PC-9 (cell line): ENCODE measurements at regions of chr3 and their contacts with region 1.

Region 1: DNA sequence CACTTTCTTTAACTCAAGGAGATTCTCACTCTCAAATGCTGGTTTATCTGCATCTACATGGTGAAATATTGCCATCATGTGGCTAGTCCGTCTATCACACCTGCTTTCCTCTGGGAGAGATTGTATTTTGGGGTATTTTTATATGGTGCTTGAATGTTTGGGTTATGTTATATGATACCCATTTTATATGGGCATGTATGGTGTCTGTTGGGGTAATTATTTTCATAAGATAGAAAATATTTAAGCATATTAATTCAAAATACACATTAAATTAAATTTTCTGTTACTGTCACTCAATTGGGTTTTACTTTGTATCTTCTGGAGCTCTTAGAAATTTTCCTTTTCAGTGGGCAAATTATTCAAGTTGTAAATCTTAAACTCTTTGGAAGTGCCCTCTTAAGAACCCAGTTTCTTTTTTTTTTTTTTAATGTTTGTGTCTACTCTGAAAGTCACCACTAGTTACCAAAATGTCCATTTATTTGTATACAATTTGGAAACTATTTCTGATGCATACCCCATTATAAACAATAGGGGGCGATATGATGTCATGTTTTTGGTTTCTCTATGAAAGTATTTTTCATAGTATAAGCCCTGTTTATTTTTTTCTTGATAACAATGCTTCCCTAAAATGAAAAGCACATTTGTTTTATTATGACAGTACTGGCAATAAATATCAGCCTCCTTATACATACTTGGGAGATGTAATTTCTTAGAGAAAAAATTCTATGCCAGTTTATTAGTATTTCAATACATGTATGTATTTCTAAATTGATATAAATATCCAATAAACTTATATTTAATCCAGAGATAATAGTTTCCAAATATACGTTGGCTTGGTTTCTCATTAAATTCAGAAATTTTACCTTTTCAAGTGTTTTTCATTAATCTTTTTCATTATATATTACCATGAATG is 36.1 kb upstream of the PLSCR5 start:
- DNase-seq: peak in 1 of 2 experiments; percentile 32
- H3K4me3 ChIP-seq: no peak overlapping the region
- H3K27ac ChIP-seq: no peak overlapping the region
- H3K4me1 ChIP-seq: no peaks in the 10 kb centered on the region
- H3K27me3 ChIP-seq: no peaks in the 10 kb centered on the region
- CTCF ChIP-seq: peak; percentile 65

Region 2: GRCh38 chr3:145776782-145777408 is 864.3 kb before region 1 on chr3:
- CTCF ChIA-PET with region 1: no interaction called
- POLR2A ChIA-PET with region 1: no interaction called
- intact Hi-C with region 1: loop called (anchors 10 kb)
- DNase-seq: peak in 1 of 2 experiments; percentile 25
- H3K4me3 ChIP-seq: no peak overlapping the region
- H3K27ac ChIP-seq: no peak overlapping the region
- H3K4me1 ChIP-seq: no peaks in the 10 kb centered on the region
- H3K27me3 ChIP-seq: no peaks in the 10 kb centered on the region
- CTCF ChIP-seq: peak; percentile 71

Region 3: GRCh38 chr3:146065573-146066006 is 575.6 kb before region 1 on chr3:
- CTCF ChIA-PET with region 1: interaction called, 4 read pairs
- POLR2A ChIA-PET with region 1: no interaction called
- intact Hi-C with region 1: loop called (anchors 5 kb)
- DNase-seq: peak; percentile 15 to 37
- H3K4me3 ChIP-seq: no peak overlapping the region
- H3K27ac ChIP-seq: no peak overlapping the region
- H3K4me1 ChIP-seq: 0 out of 2 replicates have a peak, but pooled peaks cover 9% of the 10 kb centered on the region
- H3K27me3 ChIP-seq: no peaks in the 10 kb centered on the region
- CTCF ChIP-seq: peak; percentile 91

Region 4: GRCh38 chr3:146189519-146190173 is 451.6 kb before region 1 on chr3:
- CTCF ChIA-PET with region 1: interaction called, 3 read pairs
- POLR2A ChIA-PET with region 1: no interaction called
- intact Hi-C with region 1: loop called (anchors 2 kb)
- DNase-seq: peak; percentile 16 to 45
- H3K4me3 ChIP-seq: no peak overlapping the region
- H3K27ac ChIP-seq: no peak overlapping the region
- H3K4me1 ChIP-seq: no peaks in the 10 kb centered on the region
- H3K27me3 ChIP-seq: no peaks in the 10 kb centered on the region
- CTCF ChIP-seq: peak; percentile 82

Region 5: GRCh38 chr3:146589899-146590508 is 51.2 kb before region 1 on chr3:
- CTCF ChIA-PET with region 1: interaction called, 7 read pairs
- POLR2A ChIA-PET with region 1: no interaction called
- intact Hi-C with region 1: loop called (anchors 1 kb)
- DNase-seq: peak in 1 of 2 experiments; percentile 19
- H3K4me3 ChIP-seq: no peak overlapping the region
- H3K27ac ChIP-seq: no peak overlapping the region
- H3K4me1 ChIP-seq: no peaks in the 10 kb centered on the region
- H3K27me3 ChIP-seq: no peaks in the 10 kb centered on the region
- CTCF ChIP-seq: peak; percentile 64

Region 6: DNA sequence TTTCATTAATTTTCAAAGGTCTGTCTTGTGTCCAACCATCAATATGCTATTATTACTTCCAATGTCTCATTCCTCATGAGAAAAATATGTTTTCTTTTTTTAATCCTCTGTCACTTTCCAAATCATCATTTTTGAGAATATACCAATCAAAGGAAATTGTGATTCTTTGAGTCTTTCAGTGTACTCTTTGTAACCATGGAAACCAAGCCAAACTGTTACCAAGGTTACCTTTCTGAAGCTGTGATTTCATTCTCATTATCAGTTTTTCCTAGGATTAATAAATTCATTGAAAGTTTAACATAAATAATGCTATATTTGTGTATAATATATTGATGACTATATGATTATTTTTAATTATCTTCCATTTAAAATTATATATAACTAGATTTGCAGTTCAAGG is 19.5 kb before region 1 on chr3:
- CTCF ChIA-PET with region 1: no interaction called
- POLR2A ChIA-PET with region 1: no interaction called
- intact Hi-C with region 1: loop called (anchors 1 kb)
- DNase-seq: no peak
- H3K4me3 ChIP-seq: no peak overlapping the region
- H3K27ac ChIP-seq: no peak overlapping the region
- H3K4me1 ChIP-seq: no peaks in the 10 kb centered on the region
- H3K27me3 ChIP-seq: no peaks in the 10 kb centered on the region
- CTCF ChIP-seq: no peak

Region 7: GRCh38 chr3:147191795-147192385 is 550.7 kb after region 1 on chr3:
- CTCF ChIA-PET with region 1: no interaction called
- POLR2A ChIA-PET with region 1: no interaction called
- intact Hi-C with region 1: loop called (anchors 2 kb)
- DNase-seq: peak in 1 of 2 experiments; percentile 25
- H3K4me3 ChIP-seq: no peak overlapping the region
- H3K27ac ChIP-seq: no peak overlapping the region
- H3K4me1 ChIP-seq: no peaks in the 10 kb centered on the region
- H3K27me3 ChIP-seq: no peaks in the 10 kb centered on the region
- CTCF ChIP-seq: peak; percentile 84